H1 (cell line): ENCODE measurements at regions of chr16 and their contacts with region 1.

Region 1: GRCh38 chr16:85610508-85611332 is 2.4 kb upstream of the GSE1 start:
- DNase-seq: peak; percentile 88 to 96
- H3K4me3 ChIP-seq: peak overlapping the region; percentile 29 to 92 (median 52); a peak in 6 of 8 replicates
- H3K27ac ChIP-seq: peak overlapping the region; percentile 70; the same call in 1 of the 2 replicates
- H3K4me1 ChIP-seq: peaks cover 10 to 46% (median 41%) of the 10 kb centered on the region in 4 experiments
- H3K27me3 ChIP-seq: peaks cover 0 to 9% (median 4%) of the 10 kb centered on the region in 4 experiments; a peak in 2 of 7 replicates
- CTCF ChIP-seq: peak in 2 of 3 experiments; percentile 90 to 99; a peak in 3 of 4 replicates
- EP300 ChIP-seq: peak in 1 of 2 experiments; percentile 83; a peak in 1 of 3 replicates
- POLR2A ChIP-seq: no peak
- RAD21 ChIP-seq: peak; percentile 97 to 98

Region 2: DNA sequence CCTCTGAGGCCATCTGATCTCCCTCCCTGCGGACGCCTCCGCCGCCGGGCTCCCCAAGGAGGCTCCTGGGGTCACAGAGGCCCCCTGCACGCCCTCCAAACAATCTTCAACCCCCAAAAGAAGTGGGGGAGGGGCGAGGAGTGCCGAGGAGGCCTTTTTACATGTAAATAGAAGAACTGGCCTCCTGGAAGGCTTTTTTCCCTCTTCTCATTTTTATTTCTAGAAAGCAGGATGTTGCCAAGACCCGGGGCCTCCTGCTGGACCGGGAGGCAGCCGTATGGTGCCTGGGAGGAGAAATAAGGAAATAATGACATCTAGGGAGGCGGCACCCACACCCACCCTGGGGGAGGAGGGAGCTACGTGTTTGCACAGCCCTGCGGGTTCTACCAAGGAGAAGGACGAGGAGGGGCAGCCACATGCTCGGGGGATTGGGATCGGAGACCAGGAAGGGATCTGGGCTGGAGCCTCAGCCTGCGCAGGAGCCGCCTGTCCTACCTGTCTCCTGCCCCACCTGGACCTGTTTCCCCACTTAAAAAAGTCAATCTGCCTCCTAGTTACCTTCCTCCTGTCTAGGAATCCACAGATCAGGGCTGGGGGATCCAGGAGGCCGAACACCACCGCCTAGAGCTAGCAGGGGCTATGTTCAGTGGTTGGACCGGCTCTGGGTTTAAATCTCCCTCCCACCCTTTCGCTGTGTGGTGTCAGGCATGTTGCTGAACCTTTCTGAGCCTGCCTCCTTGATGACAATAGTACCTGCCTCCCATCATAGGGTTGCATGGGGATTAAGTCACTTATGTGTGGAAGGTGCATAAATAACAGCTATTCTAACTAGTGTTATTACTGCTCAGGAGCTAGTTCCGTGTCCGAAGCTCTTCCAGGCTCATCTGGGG is 173.3 kb before region 1 on chr16:
- CTCF ChIA-PET with region 1: interaction called, 13 read pairs
- POLR2A ChIA-PET with region 1: interaction called, 6 read pairs
- DNase-seq: no peak
- H3K4me3 ChIP-seq: peak overlapping the region in 1 of 4 experiments; percentile 50; a peak in 2 of 8 replicates
- H3K27ac ChIP-seq: peak overlapping the region; percentile 21; the same call in 1 of the 2 replicates
- H3K4me1 ChIP-seq: peaks cover 14 to 47% (median 35%) of the 10 kb centered on the region in 4 experiments
- H3K27me3 ChIP-seq: peaks cover 0 to 7% (median 0%) of the 10 kb centered on the region in 4 experiments; a peak in 3 of 7 replicates
- CTCF ChIP-seq: no peak
- EP300 ChIP-seq: no peak
- POLR2A ChIP-seq: no peak; a peak in 1 of 3 replicates
- RAD21 ChIP-seq: no peak

Region 3: GRCh38 chr16:85473909-85474620 is 136.7 kb before region 1 on chr16:
- CTCF ChIA-PET with region 1: interaction called, 12 read pairs
- POLR2A ChIA-PET with region 1: interaction called, 3 read pairs
- DNase-seq: peak in 1 of 2 experiments; percentile 57
- H3K4me3 ChIP-seq: no peak overlapping the region
- H3K27ac ChIP-seq: no peak overlapping the region
- H3K4me1 ChIP-seq: peaks cover 4 to 23% (median 13%) of the 10 kb centered on the region in 4 experiments
- H3K27me3 ChIP-seq: no peaks in the 10 kb centered on the region; a peak in 1 of 7 replicates
- CTCF ChIP-seq: peak in 1 of 3 experiments; percentile 16; a peak in 1 of 4 replicates
- EP300 ChIP-seq: no peak
- POLR2A ChIP-seq: no peak
- RAD21 ChIP-seq: peak in 1 of 2 experiments; percentile 20; a peak in 2 of 4 replicates

Region 4: GRCh38 chr16:85536411-85537330 is 74.0 kb before region 1 on chr16:
- CTCF ChIA-PET with region 1: interaction called, 16 read pairs
- POLR2A ChIA-PET with region 1: no interaction called
- DNase-seq: no peak
- H3K4me3 ChIP-seq: no peak overlapping the region
- H3K27ac ChIP-seq: no peak overlapping the region
- H3K4me1 ChIP-seq: peaks cover 0 to 5% (median 3%) of the 10 kb centered on the region in 4 experiments; a peak in 5 of 7 replicates
- H3K27me3 ChIP-seq: no peaks in the 10 kb centered on the region
- CTCF ChIP-seq: no peak
- EP300 ChIP-seq: no peak
- POLR2A ChIP-seq: no peak
- RAD21 ChIP-seq: no peak

Region 5: GRCh38 chr16:85569615-85570212 is 41.0 kb before region 1 on chr16:
- CTCF ChIA-PET with region 1: interaction called, 37 read pairs
- POLR2A ChIA-PET with region 1: interaction called, 4 read pairs
- DNase-seq: no peak
- H3K4me3 ChIP-seq: no peak overlapping the region
- H3K27ac ChIP-seq: no peak overlapping the region; the same call in 1 of the 2 replicates
- H3K4me1 ChIP-seq: peaks cover 24 to 65% (median 41%) of the 10 kb centered on the region in 4 experiments
- H3K27me3 ChIP-seq: peaks cover 0 to 3% (median 0%) of the 10 kb centered on the region in 4 experiments; a peak in 2 of 7 replicates
- CTCF ChIP-seq: no peak
- EP300 ChIP-seq: 0 out of 3 replicates have a peak, but pooled peaks of 1 of the 2 experiments have one; percentile 22
- POLR2A ChIP-seq: no peak
- RAD21 ChIP-seq: no peak; a peak in 1 of 4 replicates

Region 6: DNA sequence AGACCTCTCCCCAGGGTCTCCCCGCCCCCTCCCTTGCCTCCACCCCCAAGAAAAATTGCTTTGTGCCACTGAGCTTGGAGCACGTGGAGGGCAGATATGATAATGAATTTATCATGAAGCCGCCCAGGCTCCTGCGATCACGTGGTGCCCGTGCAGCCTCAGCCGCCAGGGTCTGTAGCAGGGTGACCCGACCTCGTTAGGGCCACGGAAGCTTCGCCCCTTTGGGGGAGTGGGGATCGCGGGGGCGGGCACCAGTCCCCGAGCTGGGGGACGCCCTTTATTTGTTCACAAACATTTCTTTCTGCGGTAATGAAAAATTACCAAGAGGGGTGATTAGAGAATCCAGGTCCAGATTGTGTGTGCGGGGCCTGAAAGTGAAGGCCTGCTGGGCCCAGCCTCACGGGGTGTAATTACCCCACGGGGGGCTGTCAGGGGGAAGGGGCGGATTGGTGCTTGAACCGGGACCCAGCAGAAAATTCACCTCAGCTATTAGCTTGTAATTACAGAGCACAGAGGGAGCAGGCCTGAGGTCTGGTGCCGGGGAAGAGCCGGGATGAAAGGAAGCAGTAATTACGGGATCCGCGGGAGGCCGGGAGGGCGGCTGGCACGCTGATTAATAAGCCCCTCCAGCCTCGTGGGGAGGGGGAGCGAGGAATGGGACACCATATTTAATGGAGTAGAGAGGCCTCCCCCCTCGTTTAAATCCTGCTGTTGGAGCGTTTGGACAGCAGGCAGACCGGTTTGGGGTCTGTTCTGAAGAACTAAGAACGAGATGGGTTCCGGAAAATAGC is 15.7 kb after region 1 on chr16:
- CTCF ChIA-PET with region 1: interaction called, 93 read pairs
- POLR2A ChIA-PET with region 1: interaction called, 19 read pairs
- DNase-seq: peak in 1 of 2 experiments; percentile 71
- H3K4me3 ChIP-seq: peak overlapping the region in 3 of 4 experiments; percentile 20 to 50 (median 21); a peak in 5 of 8 replicates
- H3K27ac ChIP-seq: no peak overlapping the region; the same call in 1 of the 2 replicates
- H3K4me1 ChIP-seq: peaks cover 0 to 21% (median 12%) of the 10 kb centered on the region in 4 experiments; a peak in 6 of 7 replicates
- H3K27me3 ChIP-seq: no peaks in the 10 kb centered on the region; a peak in 1 of 7 replicates
- CTCF ChIP-seq: no peak
- EP300 ChIP-seq: no peak
- POLR2A ChIP-seq: no peak
- RAD21 ChIP-seq: no peak

Region 7: GRCh38 chr16:85667841-85668413 is 57.2 kb after region 1 on chr16:
- CTCF ChIA-PET with region 1: no interaction called
- POLR2A ChIA-PET with region 1: no interaction called
- DNase-seq: no peak
- H3K4me3 ChIP-seq: no peak overlapping the region
- H3K27ac ChIP-seq: no peak overlapping the region
- H3K4me1 ChIP-seq: no peaks in the 10 kb centered on the region
- H3K27me3 ChIP-seq: no peaks in the 10 kb centered on the region
- CTCF ChIP-seq: no peak
- EP300 ChIP-seq: no peak
- POLR2A ChIP-seq: no peak
- RAD21 ChIP-seq: no peak